CD4-positive, alpha-beta memory T cell (primary cell): ENCODE measurements at regions of chrX and their contacts with region 1.

Region 1: DNA sequence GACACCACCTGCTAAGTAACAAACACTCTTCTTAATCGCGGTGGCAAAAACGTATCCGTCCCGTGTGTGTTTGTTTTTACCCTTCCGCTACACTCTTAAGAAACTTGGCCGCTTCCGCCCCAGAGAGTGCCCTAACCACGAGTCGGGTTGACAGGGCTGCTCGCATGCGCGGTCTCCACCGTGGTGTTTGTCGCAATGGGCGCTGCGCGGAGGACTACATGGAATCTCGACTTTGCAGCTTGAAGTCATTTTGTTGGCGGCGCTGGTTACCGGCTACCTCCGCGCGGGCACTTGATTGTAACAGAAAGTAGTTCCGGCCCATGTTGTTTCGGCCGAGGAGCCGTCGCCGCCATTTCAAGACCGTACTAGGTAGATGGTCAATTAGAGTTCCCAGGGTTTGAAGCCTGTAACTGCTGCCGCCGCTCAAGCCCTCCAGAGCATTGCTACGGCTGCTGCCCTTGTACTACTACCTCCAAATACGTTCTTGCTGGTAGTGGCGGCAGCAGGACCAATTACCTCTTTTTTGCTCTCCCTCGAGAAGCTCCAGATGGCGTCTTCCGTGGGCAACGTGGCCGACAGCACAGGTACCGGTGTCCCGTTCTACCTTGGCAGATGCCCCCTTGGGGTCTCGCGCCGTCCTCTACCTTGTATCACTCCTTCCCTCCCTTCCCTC is at the start of gene OGT:
- DNase-seq: peak; percentile 89 to 95 (median 94)
- H3K4me3 ChIP-seq: peak within 1 kb of the TSS; percentile 79 to 94
- H3K4me3 Mint-ChIP-seq: peak within 1 kb of the TSS; percentile 95 to 99 (median 98)
- H3K27ac ChIP-seq: peak within 1 kb of the TSS; percentile 89
- H3K27ac Mint-ChIP-seq: peak within 1 kb of the TSS; percentile 97 to 99 (median 97)
- H3K4me1 ChIP-seq: peaks cover 21% of the 10 kb centered on the region
- H3K4me1 Mint-ChIP-seq: peaks cover 12 to 53% (median 25%) of the 10 kb centered on the region in 4 donors
- H3K27me3 ChIP-seq: no peaks in the 10 kb centered on the region
- H3K27me3 Mint-ChIP-seq: no peaks in the 10 kb centered on the region
- total RNA-seq, gene OGT: 515 to 525 TPM

Region 2: DNA sequence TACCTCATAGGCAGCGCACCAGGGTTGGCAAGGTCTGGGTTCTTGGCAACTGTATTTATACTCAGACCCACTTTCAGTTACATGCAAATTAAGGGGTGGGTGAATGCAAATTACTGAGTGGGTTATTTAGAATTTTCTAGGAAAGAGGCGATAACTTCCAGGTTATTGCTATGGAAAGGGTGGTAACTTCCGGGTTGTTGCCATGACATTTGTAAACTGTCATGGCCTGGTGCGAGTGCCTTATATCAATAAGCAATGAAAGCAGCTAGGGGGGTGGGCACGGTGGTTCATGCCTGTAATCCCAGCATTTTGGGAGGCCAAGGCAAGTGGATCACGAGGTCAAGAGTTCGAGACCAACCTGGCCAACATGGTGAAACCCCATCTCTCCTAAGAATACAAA is 544.5 kb before region 1 on chrX:
- CTCF ChIA-PET with region 1: no interaction called
- POLR2A ChIA-PET with region 1: no interaction called
- intact Hi-C with region 1: no loop called
- DNase-seq: peak in 1 of 5 donors; percentile 30
- H3K4me3 ChIP-seq: no peak overlapping the region
- H3K4me3 Mint-ChIP-seq: no peak overlapping the region
- H3K27ac ChIP-seq: no peak overlapping the region
- H3K27ac Mint-ChIP-seq: peak overlapping the region in 1 of 7 donors; percentile 61
- H3K4me1 ChIP-seq: no peaks in the 10 kb centered on the region
- H3K4me1 Mint-ChIP-seq: peaks cover 0 to 5% (median 0%) of the 10 kb centered on the region in 4 donors
- H3K27me3 ChIP-seq: no peaks in the 10 kb centered on the region
- H3K27me3 Mint-ChIP-seq: no peaks in the 10 kb centered on the region

Region 3: DNA sequence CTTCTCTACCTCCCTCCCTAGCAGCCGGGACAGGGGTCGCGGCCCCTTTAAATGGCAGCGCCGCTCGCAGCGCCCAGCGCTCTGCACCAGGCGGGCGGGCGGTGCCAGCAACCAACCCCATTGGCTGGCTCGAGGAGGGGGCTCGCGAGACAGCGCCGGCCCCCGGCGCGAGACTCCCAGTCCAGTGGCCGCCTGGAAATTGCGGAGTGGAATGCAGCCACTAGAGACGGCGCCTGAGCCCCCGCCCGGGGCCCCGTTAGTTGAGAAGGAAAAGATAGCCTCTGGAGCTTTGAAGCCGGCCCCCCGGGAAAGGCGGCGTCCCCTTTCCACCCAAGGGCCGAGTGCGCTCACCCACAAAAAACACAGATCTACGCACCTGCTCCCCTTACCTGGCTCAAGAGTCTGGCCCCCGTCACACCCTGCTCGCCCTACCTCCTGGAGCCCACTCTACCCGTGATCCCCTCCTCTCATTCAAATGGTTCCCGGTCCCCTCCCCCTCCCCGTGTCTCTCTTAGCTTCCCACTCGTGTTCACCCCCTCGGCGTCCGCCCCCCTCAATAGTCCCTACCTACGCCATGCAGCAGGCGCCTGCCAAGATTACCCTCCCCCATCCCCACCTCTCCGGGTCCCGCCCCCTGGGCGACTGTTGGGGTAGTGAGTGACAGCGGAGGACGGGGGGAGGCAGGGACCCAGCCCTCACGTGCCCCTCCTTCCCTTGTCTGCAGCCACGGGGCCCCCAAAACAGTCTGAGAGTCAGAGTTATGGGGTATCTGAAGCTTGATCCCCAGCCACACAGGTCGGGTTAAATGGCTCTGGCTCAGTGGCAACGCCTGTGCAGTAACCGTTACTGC is 278.6 kb before region 1 on chrX and contains the start of gene ZMYM3:
- CTCF ChIA-PET with region 1: no interaction called
- POLR2A ChIA-PET with region 1: interaction called, 13 read pairs
- intact Hi-C with region 1: no loop called
- DNase-seq: peak; percentile 75 to 86 (median 77)
- H3K4me3 ChIP-seq: peak within 1 kb of the TSS; percentile 52 to 81
- H3K4me3 Mint-ChIP-seq: peak within 1 kb of the TSS; percentile 90 to 98 (median 92)
- H3K27ac ChIP-seq: peak within 1 kb of the TSS; percentile 77
- H3K27ac Mint-ChIP-seq: peak within 1 kb of the TSS; percentile 93 to 97 (median 95)
- H3K4me1 ChIP-seq: peaks cover 25% of the 10 kb centered on the region
- H3K4me1 Mint-ChIP-seq: peaks cover 5 to 32% (median 13%) of the 10 kb centered on the region in 4 donors
- H3K27me3 ChIP-seq: no peaks in the 10 kb centered on the region
- H3K27me3 Mint-ChIP-seq: no peaks in the 10 kb centered on the region
- total RNA-seq, gene ZMYM3: 28.0 to 28.2 TPM

Region 4: GRCh38 chrX:71365876-71366673 is 166.8 kb before region 1 on chrX and contains the start of gene TAF1:
- CTCF ChIA-PET with region 1: interaction called, 4 read pairs
- POLR2A ChIA-PET with region 1: interaction called, 66 read pairs
- intact Hi-C with region 1: loop called (anchors 1 kb)
- DNase-seq: peak; percentile 85 to 96 (median 93)
- H3K4me3 ChIP-seq: peak within 1 kb of the TSS; percentile 52 to 82
- H3K4me3 Mint-ChIP-seq: peak within 1 kb of the TSS; percentile 86 to 100 (median 96)
- H3K27ac ChIP-seq: peak within 1 kb of the TSS; percentile 86
- H3K27ac Mint-ChIP-seq: peak within 1 kb of the TSS; percentile 97 to 99 (median 98)
- H3K4me1 ChIP-seq: peaks cover 31% of the 10 kb centered on the region
- H3K4me1 Mint-ChIP-seq: peaks cover 14 to 35% (median 24%) of the 10 kb centered on the region in 4 donors
- H3K27me3 ChIP-seq: no peaks in the 10 kb centered on the region
- H3K27me3 Mint-ChIP-seq: no peaks in the 10 kb centered on the region
- total RNA-seq, gene TAF1: 73.6 to 81.8 TPM

Region 5: DNA sequence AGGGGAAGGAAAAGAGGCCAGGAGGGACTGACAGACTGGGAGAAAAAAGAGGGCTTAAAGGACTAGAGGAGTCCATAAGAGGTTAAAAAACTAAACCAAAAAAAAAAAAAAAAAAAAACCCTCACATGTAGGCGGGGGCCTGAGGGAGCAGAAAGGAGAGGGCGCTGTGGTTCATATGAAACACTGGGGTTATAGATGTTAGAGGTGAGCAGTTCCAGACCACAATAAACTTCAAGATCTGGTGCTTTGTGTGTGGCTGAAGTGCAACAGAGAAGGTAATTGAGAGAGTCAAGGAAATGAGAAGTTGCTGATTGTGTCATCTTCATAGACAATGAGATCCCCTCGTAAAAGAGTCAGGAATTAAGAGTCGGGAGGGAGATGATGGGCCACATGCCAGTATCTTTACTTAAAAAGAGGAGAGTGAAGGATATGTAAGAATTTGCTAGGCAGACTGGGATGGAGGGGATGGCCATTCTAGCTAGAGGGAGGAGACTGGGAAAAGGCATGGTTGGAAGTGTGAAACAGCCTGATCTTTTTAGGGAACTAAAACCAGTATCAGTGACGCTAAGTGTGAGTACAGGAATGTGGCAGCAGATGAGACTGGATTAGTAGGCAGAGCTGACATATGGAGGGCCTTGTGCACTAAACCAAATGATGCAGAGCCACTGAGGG is 18.4 kb before region 1 on chrX:
- CTCF ChIA-PET with region 1: interaction called, 3 read pairs
- POLR2A ChIA-PET with region 1: interaction called, 17 read pairs
- intact Hi-C with region 1: loop called (anchors 2 kb)
- DNase-seq: peak; percentile 43 to 63 (median 55)
- H3K4me3 ChIP-seq: no peak overlapping the region
- H3K4me3 Mint-ChIP-seq: peak overlapping the region in 2 of 8 donors; percentile 14 to 56
- H3K27ac ChIP-seq: no peak overlapping the region
- H3K27ac Mint-ChIP-seq: peak overlapping the region; percentile 6 to 81 (median 43)
- H3K4me1 ChIP-seq: peaks cover 5% of the 10 kb centered on the region
- H3K4me1 Mint-ChIP-seq: peaks cover 4 to 11% (median 9%) of the 10 kb centered on the region in 4 donors
- H3K27me3 ChIP-seq: no peaks in the 10 kb centered on the region
- H3K27me3 Mint-ChIP-seq: no peaks in the 10 kb centered on the region

Region 6: GRCh38 chrX:71606536-71607216 is 73.8 kb after region 1 on chrX:
- CTCF ChIA-PET with region 1: no interaction called
- POLR2A ChIA-PET with region 1: interaction called, 12 read pairs
- intact Hi-C with region 1: no loop called
- DNase-seq: peak in 4 of 5 donors; percentile 35 to 71 (median 46)
- H3K4me3 ChIP-seq: no peak overlapping the region
- H3K4me3 Mint-ChIP-seq: peak overlapping the region in 7 of 8 donors; percentile 10 to 75 (median 55)
- H3K27ac ChIP-seq: peak overlapping the region; percentile 51
- H3K27ac Mint-ChIP-seq: peak overlapping the region; percentile 68 to 93 (median 90)
- H3K4me1 ChIP-seq: peaks cover 44% of the 10 kb centered on the region
- H3K4me1 Mint-ChIP-seq: peaks cover 41 to 74% (median 51%) of the 10 kb centered on the region in 4 donors
- H3K27me3 ChIP-seq: no peaks in the 10 kb centered on the region
- H3K27me3 Mint-ChIP-seq: no peaks in the 10 kb centered on the region